ENCODE measurements at regions of chr10 and their contacts with region 1.

Region 1: GRCh38 chr10:69392481-69393000 is 24.2 kb downstream of the TACR2 start:
- DNase-seq: peak; percentile 90
- H3K4me3 Mint-ChIP-seq: no peak overlapping the region
- H3K27ac Mint-ChIP-seq: peak overlapping the region; percentile 51
- H3K4me1 Mint-ChIP-seq: peaks cover 19% of the 10 kb centered on the region
- H3K27me3 Mint-ChIP-seq: no peaks in the 10 kb centered on the region
- CTCF ChIP-seq: peak; percentile 96

Region 2: DNA sequence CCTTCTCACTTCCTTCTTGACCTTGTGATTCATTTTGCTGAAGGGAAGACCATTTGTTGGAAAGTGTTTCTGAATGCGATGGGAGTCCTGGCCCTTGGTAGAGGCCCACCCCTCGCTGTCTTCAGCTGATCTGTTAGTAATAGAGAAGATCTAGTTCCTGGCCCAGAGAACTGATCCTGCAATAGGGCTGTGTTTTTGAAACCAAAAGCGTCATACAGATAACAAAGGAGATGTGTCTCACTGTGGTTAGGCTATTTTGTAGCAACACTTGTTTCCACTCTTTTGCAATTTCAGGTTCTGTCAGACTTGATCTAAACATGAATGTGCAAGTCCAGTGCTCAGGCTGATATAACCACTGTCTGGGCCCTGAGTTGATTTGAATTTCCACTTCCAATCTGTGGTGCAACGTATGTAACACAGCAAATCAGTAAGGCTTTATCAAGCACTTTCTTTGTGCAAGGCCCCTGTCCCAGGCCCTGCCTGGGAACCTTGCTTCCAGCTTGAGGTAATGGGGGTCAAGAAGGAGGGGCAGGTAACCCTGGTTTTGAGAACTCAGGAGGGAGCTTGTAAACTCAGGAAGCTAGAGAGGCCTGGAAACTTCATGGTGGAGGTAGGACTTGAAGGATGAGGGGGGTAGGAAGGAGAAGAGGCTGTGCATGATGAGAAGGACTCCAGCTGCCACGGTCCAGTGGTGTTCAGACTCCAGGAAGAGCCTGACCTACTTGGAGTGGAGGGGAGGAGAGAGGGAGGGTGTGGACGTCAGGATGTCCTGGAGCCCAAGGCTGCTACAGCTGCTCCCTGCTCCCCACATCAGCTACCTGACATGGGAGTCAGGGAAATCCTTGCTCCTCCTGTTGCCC is 346.9 kb before region 1 on chr10:
- CTCF ChIA-PET with region 1: no interaction called
- POLR2A ChIA-PET with region 1: no interaction called
- intact Hi-C with region 1: no loop called
- DNase-seq: peak; percentile 70
- H3K4me3 Mint-ChIP-seq: no peak overlapping the region
- H3K27ac Mint-ChIP-seq: peak overlapping the region; percentile 94
- H3K4me1 Mint-ChIP-seq: peaks cover 10% of the 10 kb centered on the region
- H3K27me3 Mint-ChIP-seq: no peaks in the 10 kb centered on the region
- CTCF ChIP-seq: no peak

Region 3: DNA sequence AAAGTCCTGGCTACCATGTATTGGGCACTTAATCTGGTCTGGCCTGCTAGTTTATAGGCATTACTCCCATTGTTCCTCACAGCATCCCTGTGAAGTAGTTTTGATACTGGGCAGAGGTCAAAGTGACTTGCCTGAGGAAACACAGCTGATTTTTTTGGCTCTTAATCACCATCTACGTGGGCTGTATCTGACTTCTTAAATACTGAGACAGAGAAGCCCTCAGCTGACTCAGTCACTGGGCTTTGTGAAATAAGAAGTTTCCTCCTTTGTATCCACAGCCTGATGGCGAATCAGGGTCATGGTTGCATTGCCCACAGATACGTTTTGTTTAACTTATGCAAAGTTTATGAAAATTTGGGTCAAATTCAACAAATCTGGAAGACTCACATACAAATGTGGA is 11.0 kb after region 1 on chr10:
- CTCF ChIA-PET with region 1: interaction called, 11 read pairs
- POLR2A ChIA-PET with region 1: no interaction called
- intact Hi-C with region 1: loop called (anchors 1 kb)
- DNase-seq: no peak
- H3K4me3 Mint-ChIP-seq: no peak overlapping the region
- H3K27ac Mint-ChIP-seq: no peak overlapping the region
- H3K4me1 Mint-ChIP-seq: peaks cover 15% of the 10 kb centered on the region
- H3K27me3 Mint-ChIP-seq: no peaks in the 10 kb centered on the region
- CTCF ChIP-seq: no peak

Region 4: DNA sequence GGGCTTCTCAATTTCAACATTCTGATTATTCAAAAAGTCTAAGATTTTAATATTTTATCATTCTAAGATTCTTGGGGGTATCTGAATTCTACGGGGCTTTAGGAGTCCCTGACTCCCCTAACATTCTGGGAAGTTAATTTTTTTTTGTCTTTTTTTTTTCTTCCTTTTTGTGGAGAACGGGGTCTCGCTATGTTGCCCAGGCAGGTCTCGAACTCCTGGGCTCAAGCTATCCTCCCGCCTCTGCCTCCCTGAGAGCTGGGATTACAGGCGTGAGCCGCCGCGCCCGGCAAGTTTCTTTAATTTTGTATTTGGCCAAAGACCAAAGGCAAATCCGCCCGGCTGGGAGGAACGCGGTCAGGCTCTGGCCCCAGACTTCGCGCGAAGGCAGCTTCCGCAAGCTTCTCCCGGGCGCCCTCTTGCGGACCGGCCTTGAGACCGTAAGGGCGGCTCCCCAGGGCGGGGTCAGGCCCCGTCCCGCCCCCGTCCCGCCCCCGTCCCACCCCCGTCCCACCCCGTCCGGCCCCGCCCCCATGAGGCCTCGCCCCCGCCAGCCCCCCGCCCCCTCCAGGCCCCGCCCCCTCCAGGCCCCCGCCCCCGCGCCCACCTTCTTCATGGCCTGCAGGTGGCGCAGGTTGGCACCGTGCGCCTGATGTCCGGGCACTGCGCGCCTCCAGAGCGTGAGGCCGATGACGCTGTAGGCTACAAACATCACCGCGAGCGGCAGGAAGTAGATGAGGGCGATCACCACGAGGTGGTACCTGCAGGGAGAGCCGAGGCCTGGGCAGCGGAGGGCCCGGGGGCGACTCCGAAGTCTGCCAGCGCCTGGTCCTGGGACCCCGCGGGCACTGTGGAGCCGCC is 16.0 kb after region 1 on chr10:
- CTCF ChIA-PET with region 1: interaction called, 11 read pairs
- POLR2A ChIA-PET with region 1: no interaction called
- intact Hi-C with region 1: loop called (anchors 1 kb)
- DNase-seq: peak; percentile 93
- H3K4me3 Mint-ChIP-seq: peak overlapping the region; percentile 65
- H3K27ac Mint-ChIP-seq: peak overlapping the region; percentile 40
- H3K4me1 Mint-ChIP-seq: peaks cover 16% of the 10 kb centered on the region
- H3K27me3 Mint-ChIP-seq: no peaks in the 10 kb centered on the region
- CTCF ChIP-seq: peak; percentile 76

Measured in MCF 10A (cell line).